Head of caudate nucleus (tissue), 42 donors: ENCODE measurements at regions of chr2 and their contacts with region 1.

Region 1: DNA sequence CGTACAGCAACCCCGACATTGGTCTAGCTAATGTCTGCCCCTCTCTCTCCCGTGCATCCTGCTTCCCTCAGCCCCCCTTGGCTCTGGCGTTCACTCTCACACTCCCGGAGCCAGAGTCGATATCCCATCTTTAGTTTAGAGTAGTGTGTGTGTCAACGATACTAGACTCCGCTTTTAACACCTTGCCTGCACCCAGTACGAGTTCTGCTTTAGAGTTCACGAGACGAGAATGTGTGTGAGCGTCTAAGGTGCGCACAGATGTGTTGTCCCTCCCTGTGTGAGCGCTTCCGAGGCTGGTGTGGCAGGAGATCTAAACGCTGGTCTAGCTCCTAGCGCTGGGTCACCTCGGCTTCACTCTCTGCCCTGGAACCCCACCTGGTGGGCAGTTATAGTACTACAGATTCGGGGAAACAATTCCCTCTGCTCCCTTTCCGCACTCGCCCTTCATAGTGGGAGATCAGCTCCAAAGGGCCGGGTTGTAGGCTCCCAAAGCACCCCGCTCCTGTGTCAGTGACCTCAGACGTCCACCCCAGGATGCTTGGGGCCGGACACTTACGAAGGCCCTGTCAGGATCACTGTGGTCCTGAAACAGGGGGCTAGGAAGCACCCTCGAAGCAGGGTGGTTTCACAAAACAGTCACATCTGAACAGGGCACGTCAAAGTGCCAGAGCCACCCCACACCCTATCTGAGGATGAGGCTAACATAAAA is 2.6 kb upstream of the CYP26B1 start:
- DNase-seq: peak; percentile 63 to 97 (median 88)

Region 2: GRCh38 chr2:71545572-71546274 is 604.6 kb before region 1 on chr2:
- intact Hi-C with region 1: loop called (anchors 5 kb)
- DNase-seq: peak in 41 of 42 donors; percentile 43 to 89 (median 68)

Region 3: GRCh38 chr2:71609958-71610357 is 540.4 kb before region 1 on chr2:
- intact Hi-C with region 1: loop called (anchors 10 kb)
- DNase-seq: peak in 21 of 42 donors; percentile 0 to 39 (median 7)

Region 4: GRCh38 chr2:72745679-72746368 is 595.5 kb after region 1 on chr2:
- intact Hi-C with region 1: loop called (anchors 10 kb)
- DNase-seq: peak in 7 of 42 donors; percentile 11 to 51 (median 32)